MCF 10A (cell line): ENCODE measurements at regions of chr3 and their contacts with region 1.

Region 1: GRCh38 chr3:112519424-112520001 is 20.2 kb upstream of the BTLA start:
- DNase-seq: peak; percentile 66
- H3K4me3 Mint-ChIP-seq: no peak overlapping the region
- H3K27ac Mint-ChIP-seq: no peak overlapping the region
- H3K4me1 Mint-ChIP-seq: no peaks in the 10 kb centered on the region
- H3K27me3 Mint-ChIP-seq: no peaks in the 10 kb centered on the region
- CTCF ChIP-seq: peak; percentile 69

Region 2: GRCh38 chr3:112327371-112327951 is 192.1 kb before region 1 on chr3:
- CTCF ChIA-PET with region 1: interaction called, 15 read pairs
- POLR2A ChIA-PET with region 1: interaction called, 3 read pairs
- intact Hi-C with region 1: loop called (anchors 1 kb)
- DNase-seq: peak; percentile 73
- H3K4me3 Mint-ChIP-seq: no peak overlapping the region
- H3K27ac Mint-ChIP-seq: no peak overlapping the region
- H3K4me1 Mint-ChIP-seq: no peaks in the 10 kb centered on the region
- H3K27me3 Mint-ChIP-seq: no peaks in the 10 kb centered on the region
- CTCF ChIP-seq: peak; percentile 54

Region 3: GRCh38 chr3:112333002-112333380 is 186.5 kb before region 1 on chr3 and contains the start of gene CD200:
- CTCF ChIA-PET with region 1: interaction called, 11 read pairs
- POLR2A ChIA-PET with region 1: interaction called, 3 read pairs
- intact Hi-C with region 1: no loop called
- DNase-seq: peak; percentile 13
- H3K4me3 Mint-ChIP-seq: peak within 1 kb of the TSS; percentile 73
- H3K27ac Mint-ChIP-seq: no peak within 1 kb of the TSS
- H3K4me1 Mint-ChIP-seq: no peaks in the 10 kb centered on the region
- H3K27me3 Mint-ChIP-seq: no peaks in the 10 kb centered on the region
- CTCF ChIP-seq: no peak
- total RNA-seq, gene CD200: 0.44 TPM in 1 of 2 replicates, not detected in the other

Region 4: GRCh38 chr3:112437146-112438022 is 82.1 kb before region 1 on chr3:
- CTCF ChIA-PET with region 1: interaction called, 3 read pairs
- POLR2A ChIA-PET with region 1: no interaction called
- intact Hi-C with region 1: loop called (anchors 1 kb)
- DNase-seq: peak; percentile 63
- H3K4me3 Mint-ChIP-seq: no peak overlapping the region
- H3K27ac Mint-ChIP-seq: no peak overlapping the region
- H3K4me1 Mint-ChIP-seq: no peaks in the 10 kb centered on the region
- H3K27me3 Mint-ChIP-seq: no peaks in the 10 kb centered on the region
- CTCF ChIP-seq: peak; percentile 51